Activated naive CD4-positive, alpha-beta T cell treated with anti-CD3 and anti-CD28 coated beads for 36 hours (primary cell): ENCODE measurements at regions of chr6 and their contacts with region 1.

Region 1: GRCh38 chr6:130602151-130602770 is 224.9 kb upstream of the SMLR1 start:
- DNase-seq: peak; percentile 50
- H3K4me3 Mint-ChIP-seq: no peak overlapping the region
- H3K27ac Mint-ChIP-seq: peak overlapping the region; percentile 28
- H3K4me1 Mint-ChIP-seq: peaks cover 21% of the 10 kb centered on the region
- H3K27me3 Mint-ChIP-seq: no peaks in the 10 kb centered on the region

Region 2: GRCh38 chr6:130161683-130162404 is 440.4 kb before region 1 on chr6:
- CTCF ChIA-PET with region 1: no interaction called
- intact Hi-C with region 1: no loop called
- DNase-seq: no peak
- H3K4me3 Mint-ChIP-seq: no peak overlapping the region
- H3K27ac Mint-ChIP-seq: no peak overlapping the region
- H3K4me1 Mint-ChIP-seq: peaks cover 9% of the 10 kb centered on the region
- H3K27me3 Mint-ChIP-seq: no peaks in the 10 kb centered on the region

Region 3: GRCh38 chr6:130560231-130560630 is 42.0 kb before region 1 on chr6:
- CTCF ChIA-PET with region 1: no interaction called
- intact Hi-C with region 1: loop called (anchors 1 kb)
- DNase-seq: no peak
- H3K4me3 Mint-ChIP-seq: no peak overlapping the region
- H3K27ac Mint-ChIP-seq: no peak overlapping the region
- H3K4me1 Mint-ChIP-seq: peaks cover 12% of the 10 kb centered on the region
- H3K27me3 Mint-ChIP-seq: no peaks in the 10 kb centered on the region

Region 4: DNA sequence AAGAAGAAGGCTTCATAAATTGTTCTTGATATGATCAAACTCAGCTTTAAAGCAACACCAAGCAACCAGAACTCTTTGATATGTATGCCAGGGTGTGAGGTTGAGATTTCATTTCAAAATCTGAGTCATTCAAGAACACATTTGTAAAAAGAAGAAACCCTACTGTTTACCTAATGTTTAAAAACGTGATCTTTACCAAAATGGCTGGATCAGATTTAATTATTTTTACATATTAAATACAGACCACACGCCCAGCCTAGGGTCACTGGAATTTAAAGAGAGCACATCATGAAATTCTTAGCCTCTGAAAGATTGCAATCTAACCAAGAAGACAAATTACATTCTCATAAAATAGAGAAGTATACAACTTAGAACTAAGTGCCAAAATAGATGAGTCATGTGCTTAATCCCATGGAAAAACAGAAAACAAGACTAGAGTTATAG is 18.1 kb after region 1 on chr6:
- CTCF ChIA-PET with region 1: no interaction called
- intact Hi-C with region 1: loop called (anchors 1 kb)
- DNase-seq: no peak
- H3K4me3 Mint-ChIP-seq: no peak overlapping the region
- H3K27ac Mint-ChIP-seq: no peak overlapping the region
- H3K4me1 Mint-ChIP-seq: peaks cover 14% of the 10 kb centered on the region
- H3K27me3 Mint-ChIP-seq: no peaks in the 10 kb centered on the region

Region 5: DNA sequence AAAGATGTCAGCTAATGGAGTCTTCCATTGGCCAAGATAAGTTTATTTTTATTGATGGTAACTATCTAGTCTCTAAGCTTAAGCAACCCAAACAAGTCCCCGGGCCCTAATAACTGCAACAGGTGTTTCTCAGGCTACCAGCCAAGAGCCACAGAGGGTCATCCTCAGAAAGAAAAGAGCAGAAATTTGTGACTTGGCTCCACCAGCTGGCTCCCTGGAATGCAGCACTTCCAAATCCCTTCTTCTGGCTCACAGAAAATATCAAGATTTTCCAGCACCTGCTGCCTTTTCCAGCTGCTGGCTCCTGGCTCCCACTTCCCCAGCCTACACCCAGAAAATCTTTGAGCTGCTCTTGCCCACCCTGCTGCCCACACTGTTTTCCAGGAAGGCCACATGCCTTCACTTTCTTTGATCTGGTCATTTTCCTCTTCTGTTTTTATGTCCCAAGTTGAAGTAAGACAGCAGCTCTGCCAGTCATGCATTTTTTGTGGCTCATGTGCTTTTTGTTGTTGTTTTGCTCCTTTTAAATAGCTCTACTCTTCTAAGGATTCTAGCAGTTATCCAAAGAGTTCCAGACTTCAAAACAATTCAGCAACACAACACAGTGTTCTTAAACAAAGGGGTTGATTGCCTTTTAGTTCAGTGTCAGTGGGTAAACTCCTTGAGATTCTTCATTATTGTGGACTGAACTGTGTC is 74.0 kb after region 1 on chr6:
- CTCF ChIA-PET with region 1: no interaction called
- intact Hi-C with region 1: loop called (anchors 2 kb)
- DNase-seq: no peak
- H3K4me3 Mint-ChIP-seq: no peak overlapping the region
- H3K27ac Mint-ChIP-seq: no peak overlapping the region
- H3K4me1 Mint-ChIP-seq: peaks cover 15% of the 10 kb centered on the region
- H3K27me3 Mint-ChIP-seq: no peaks in the 10 kb centered on the region

Region 6: DNA sequence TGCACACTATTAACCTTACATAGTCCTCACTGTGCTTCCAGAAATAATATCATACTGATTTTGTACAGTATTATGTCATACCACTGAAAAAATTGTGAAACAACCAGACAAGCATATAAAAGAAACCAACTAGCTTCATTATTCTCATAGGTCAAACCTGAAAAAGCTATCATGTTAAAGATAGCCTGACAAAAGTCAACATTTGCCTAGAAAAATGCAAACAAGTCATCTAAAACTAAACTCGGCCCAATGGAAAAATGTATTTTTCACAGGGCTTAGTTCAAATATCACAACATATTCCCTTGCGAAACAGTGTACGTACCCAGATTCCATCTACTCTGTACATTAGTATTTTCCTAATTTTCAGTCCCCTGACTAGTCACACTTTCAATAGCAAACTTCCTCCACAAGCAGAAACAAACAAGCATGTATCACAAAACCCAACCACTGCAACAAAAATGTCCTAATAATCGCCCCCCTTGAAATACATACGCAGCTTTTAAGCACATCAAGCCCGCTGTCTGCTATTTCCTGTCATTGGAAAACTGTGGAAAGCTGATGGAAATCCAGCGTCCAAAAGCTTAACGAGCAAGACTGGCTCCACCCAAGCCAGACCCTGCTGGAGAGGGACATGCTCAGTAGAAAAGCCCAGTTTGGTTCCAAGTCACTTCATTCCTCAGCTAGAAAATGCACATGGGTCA is 367.7 kb after region 1 on chr6:
- CTCF ChIA-PET with region 1: no interaction called
- intact Hi-C with region 1: no loop called
- DNase-seq: no peak
- H3K4me3 Mint-ChIP-seq: no peak overlapping the region
- H3K27ac Mint-ChIP-seq: no peak overlapping the region
- H3K4me1 Mint-ChIP-seq: peaks cover 3% of the 10 kb centered on the region
- H3K27me3 Mint-ChIP-seq: no peaks in the 10 kb centered on the region